ENCODE measurements at regions of chr16 and their contacts with region 1.

Region 1: GRCh38 chr16:69143116-69143515 is 10.7 kb downstream of the UTP4 start:
- DNase-seq: no peak
- H3K4me3 ChIP-seq: no peak overlapping the region
- H3K27ac ChIP-seq: no peak overlapping the region
- H3K4me1 ChIP-seq: no peaks in the 10 kb centered on the region
- H3K27me3 ChIP-seq: no peaks in the 10 kb centered on the region
- CTCF ChIP-seq: no peak
- POLR2A ChIP-seq: no peak

Region 2: GRCh38 chr16:68448360-68448970 is 694.7 kb before region 1 on chr16 and contains the start of gene SMPD3:
- intact Hi-C with region 1: loop called (anchors 5 kb)
- DNase-seq: no peak
- H3K4me3 ChIP-seq: peak within 1 kb of the TSS; percentile 29 to 44
- H3K27ac ChIP-seq: no peak within 1 kb of the TSS
- H3K4me1 ChIP-seq: peaks cover 24% of the 10 kb centered on the region
- H3K27me3 ChIP-seq: no peaks in the 10 kb centered on the region
- CTCF ChIP-seq: no peak
- POLR2A ChIP-seq: no peak
- total RNA-seq, gene SMPD3: 3.4 TPM

Region 3: GRCh38 chr16:69276148-69277115 is 133.3 kb after region 1 on chr16:
- intact Hi-C with region 1: no loop called
- DNase-seq: no peak
- H3K4me3 ChIP-seq: no peak overlapping the region
- H3K27ac ChIP-seq: peak overlapping the region; percentile 70
- H3K4me1 ChIP-seq: peaks cover 34% of the 10 kb centered on the region
- H3K27me3 ChIP-seq: no peaks in the 10 kb centered on the region
- CTCF ChIP-seq: no peak
- POLR2A ChIP-seq: no peak